Colonic mucosa (tissue), 4 donors: ENCODE measurements at regions of chr17 and their contacts with region 1.

Region 1: DNA sequence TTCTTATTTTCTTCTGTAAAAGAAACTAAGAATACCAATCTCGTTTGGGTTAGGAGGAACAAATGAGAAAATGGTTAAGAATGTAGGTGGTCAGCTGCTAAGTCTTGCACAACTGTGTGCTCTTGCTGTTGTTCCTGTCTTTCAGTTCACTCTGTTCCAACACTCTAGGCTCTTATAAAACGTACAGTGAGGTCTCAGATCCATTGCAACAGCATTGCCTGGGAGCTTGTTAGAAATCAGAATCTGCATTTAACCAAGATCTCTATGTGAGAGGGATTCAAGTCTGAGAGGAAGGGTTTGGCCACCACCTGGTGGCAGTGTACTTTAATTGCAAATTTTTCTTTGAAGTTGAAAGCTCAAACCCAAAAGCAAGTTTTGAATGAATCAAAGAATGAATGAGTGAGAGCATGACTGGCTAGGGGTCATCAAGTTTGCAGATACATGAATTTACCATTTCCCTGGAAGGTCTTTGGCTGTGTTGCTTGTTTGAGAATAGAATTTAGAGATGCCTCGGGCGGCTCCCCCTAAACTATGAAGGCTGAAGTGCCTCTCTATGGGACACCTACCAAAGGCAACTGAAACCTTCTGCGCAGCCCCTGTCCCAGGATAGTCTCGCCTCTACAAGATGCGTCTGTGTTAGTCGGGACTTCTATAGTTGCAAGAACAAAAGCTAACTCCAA is 2.5 kb downstream of the ALOX15B start:
- DNase-seq: peak; percentile 30
- H3K4me3 ChIP-seq: no peak overlapping the region
- H3K27ac ChIP-seq: no peak overlapping the region
- H3K4me1 ChIP-seq: no peaks in the 10 kb centered on the region
- H3K27me3 ChIP-seq: no peaks in the 10 kb centered on the region
- CTCF ChIP-seq: peak; percentile 39

Region 2: DNA sequence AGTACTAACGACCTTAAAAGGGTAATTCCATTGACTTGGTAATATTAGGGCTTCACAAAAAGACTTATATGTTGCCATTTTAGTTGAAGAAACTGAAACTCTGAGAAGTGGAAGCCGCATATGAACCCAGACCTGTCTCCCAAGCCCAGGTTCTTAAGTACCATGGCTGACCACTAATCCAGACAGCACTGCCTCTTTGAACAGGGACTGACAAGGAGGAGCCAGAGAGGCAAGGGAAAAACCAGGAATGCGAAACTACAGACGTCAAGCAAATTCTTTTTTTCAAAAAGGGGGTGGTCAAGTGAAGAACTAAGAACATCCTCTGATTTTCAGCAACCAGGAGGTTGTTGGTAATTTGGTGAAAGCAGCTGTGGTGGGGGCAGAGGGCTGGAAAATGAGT is 168.3 kb before region 1 on chr17:
- intact Hi-C with region 1: loop called (anchors 5 kb)
- DNase-seq: no peak
- H3K4me3 ChIP-seq: no peak overlapping the region
- H3K27ac ChIP-seq: no peak overlapping the region
- H3K4me1 ChIP-seq: no peaks in the 10 kb centered on the region
- H3K27me3 ChIP-seq: no peaks in the 10 kb centered on the region
- CTCF ChIP-seq: no peak

Region 3: GRCh38 chr17:7912927-7913524 is 128.4 kb before region 1 on chr17:
- intact Hi-C with region 1: loop called (anchors 5 kb)
- DNase-seq: peak; percentile 49
- H3K4me3 ChIP-seq: no peak overlapping the region
- H3K27ac ChIP-seq: no peak overlapping the region
- H3K4me1 ChIP-seq: peaks cover 9% of the 10 kb centered on the region
- H3K27me3 ChIP-seq: no peaks in the 10 kb centered on the region
- CTCF ChIP-seq: peak; percentile 60